Activated CD8-positive, alpha-beta T cell treated with anti-CD3 and anti-CD28 coated beads, Interleukin-2, amount 10 ng/mL, durations not matched to agents 7 days and 5 days (primary cell): ENCODE measurements at regions of chrX and their contacts with region 1.

Region 1: GRCh38 chrX:49257846-49258748 is 6.4 kb downstream of the FOXP3 start:
- DNase-seq: no peak
- ATAC-seq: peak; percentile 43
- H3K4me3 Mint-ChIP-seq: no peak overlapping the region
- H3K27ac Mint-ChIP-seq: peak overlapping the region; percentile 39
- H3K4me1 Mint-ChIP-seq: peaks cover 35% of the 10 kb centered on the region
- H3K27me3 Mint-ChIP-seq: no peaks in the 10 kb centered on the region

Region 2: GRCh38 chrX:49269010-49269767 is 11.1 kb after region 1 on chrX:
- CTCF ChIA-PET with region 1: no interaction called
- POLR2A ChIA-PET with region 1: interaction called, 10 read pairs
- DNase-seq: peak; percentile 96
- ATAC-seq: peak; percentile 86
- H3K4me3 Mint-ChIP-seq: peak overlapping the region; percentile 82
- H3K27ac Mint-ChIP-seq: peak overlapping the region; percentile 99
- H3K4me1 Mint-ChIP-seq: peaks cover 56% of the 10 kb centered on the region
- H3K27me3 Mint-ChIP-seq: no peaks in the 10 kb centered on the region